ENCODE measurements at regions of chrX and their contacts with region 1.

Region 1: GRCh38 chrX:95056901-95057300 is 1382.9 kb downstream of the FAM133A start:
- DNase-seq: peak; percentile 19
- H3K4me3 ChIP-seq: no peak overlapping the region
- H3K27ac ChIP-seq: no peak overlapping the region
- H3K4me1 ChIP-seq: peaks cover 25% of the 10 kb centered on the region
- H3K27me3 ChIP-seq: no peaks in the 10 kb centered on the region
- CTCF ChIP-seq: peak; percentile 50

Region 2: GRCh38 chrX:95008357-95008756 is 48.5 kb before region 1 on chrX:
- CTCF ChIA-PET with region 1: no interaction called
- dilution Hi-C with region 1: no loop called
- in situ Hi-C with region 1: no loop called
- intact Hi-C with region 1: no loop called
- DNase-seq: no peak
- H3K4me3 ChIP-seq: no peak overlapping the region
- H3K27ac ChIP-seq: no peak overlapping the region
- H3K4me1 ChIP-seq: no peaks in the 10 kb centered on the region
- H3K27me3 ChIP-seq: no peaks in the 10 kb centered on the region
- CTCF ChIP-seq: no peak

Region 3: DNA sequence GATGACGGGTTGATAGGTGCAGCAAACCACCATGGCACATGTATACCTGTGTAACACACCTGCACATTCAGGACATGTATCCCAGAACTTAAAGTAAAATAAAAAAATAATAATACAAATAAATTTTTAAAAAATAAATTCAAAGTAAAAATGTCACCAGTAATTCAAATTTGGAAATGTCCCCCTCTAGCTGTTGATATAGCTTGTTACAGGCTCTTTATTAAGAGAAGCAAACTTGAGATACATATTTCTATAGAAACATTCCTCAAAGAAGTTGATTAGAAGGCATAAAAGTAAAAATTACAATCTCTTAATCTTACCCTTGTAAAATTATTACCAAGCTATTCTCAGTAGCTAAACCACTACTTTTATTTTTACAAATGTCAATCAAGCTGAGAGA is 14.2 kb after region 1 on chrX:
- CTCF ChIA-PET with region 1: no interaction called
- dilution Hi-C with region 1: no loop called
- in situ Hi-C with region 1: no loop called
- intact Hi-C with region 1: loop called (anchors 1 kb)
- DNase-seq: no peak
- H3K4me3 ChIP-seq: no peak overlapping the region
- H3K27ac ChIP-seq: no peak overlapping the region
- H3K4me1 ChIP-seq: peaks cover 2% of the 10 kb centered on the region
- H3K27me3 ChIP-seq: peaks cover 2% of the 10 kb centered on the region
- CTCF ChIP-seq: peak; percentile 5 to 45

Region 4: DNA sequence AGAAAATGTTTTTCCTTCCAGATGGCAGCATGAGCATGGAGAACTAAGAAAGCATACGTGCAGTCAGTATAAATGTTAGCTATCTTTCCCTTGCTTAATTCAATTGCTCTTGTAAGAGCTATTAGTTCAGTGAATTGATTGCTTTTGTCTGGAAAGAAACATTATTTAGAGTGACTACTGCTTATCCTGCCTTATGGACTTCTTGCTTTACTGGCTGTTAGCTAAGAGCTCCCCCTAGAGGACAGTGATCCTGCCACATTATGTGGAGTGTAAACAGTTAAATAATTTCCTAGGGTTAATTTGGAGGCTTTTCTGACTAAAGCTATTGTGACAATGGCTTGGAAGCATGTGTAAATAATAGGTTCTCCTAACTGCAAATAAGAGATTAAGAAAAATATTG is 19.5 kb after region 1 on chrX:
- CTCF ChIA-PET with region 1: no interaction called
- dilution Hi-C with region 1: no loop called
- in situ Hi-C with region 1: no loop called
- intact Hi-C with region 1: loop called (anchors 1 kb)
- DNase-seq: peak; percentile 27
- H3K4me3 ChIP-seq: no peak overlapping the region
- H3K27ac ChIP-seq: no peak overlapping the region
- H3K4me1 ChIP-seq: peaks cover 5% of the 10 kb centered on the region
- H3K27me3 ChIP-seq: peaks cover 5% of the 10 kb centered on the region
- CTCF ChIP-seq: peak; percentile 73 to 80

Region 5: DNA sequence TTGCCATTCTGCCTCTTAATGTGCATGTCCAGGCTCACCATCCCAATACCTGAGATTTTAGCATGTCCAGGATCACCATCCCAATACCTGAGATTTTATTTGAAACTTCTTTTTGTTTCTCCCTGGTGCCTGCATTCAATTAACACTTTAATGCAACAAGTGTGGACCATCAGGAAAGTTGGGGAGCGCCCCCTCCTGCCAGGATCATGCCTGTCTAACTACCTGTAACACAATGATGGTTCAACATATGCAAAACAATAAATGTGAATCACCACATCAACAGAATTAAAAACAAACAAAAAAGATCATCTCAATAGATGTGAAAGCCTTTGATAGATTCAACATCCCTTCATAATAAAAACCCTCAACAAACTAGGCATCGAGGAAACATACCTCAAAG is 268.3 kb after region 1 on chrX:
- CTCF ChIA-PET with region 1: no interaction called
- dilution Hi-C with region 1: no loop called
- in situ Hi-C with region 1: no loop called
- intact Hi-C with region 1: loop called (anchors 1 kb)
- DNase-seq: no peak
- H3K4me3 ChIP-seq: no peak overlapping the region
- H3K27ac ChIP-seq: no peak overlapping the region
- H3K4me1 ChIP-seq: no peaks in the 10 kb centered on the region
- H3K27me3 ChIP-seq: no peaks in the 10 kb centered on the region
- CTCF ChIP-seq: peak in 1 of 2 donors; percentile 23